ENCODE measurements at regions of chr15 and their contacts with region 1.

Region 1: GRCh38 chr15:58933281-58934113 is at the start of gene SLTM:
- DNase-seq: peak; percentile 87 to 98 (median 94)
- ATAC-seq: peak; percentile 92
- H3K4me3 ChIP-seq: peak within 1 kb of the TSS; percentile 83 to 84
- H3K4me3 Mint-ChIP-seq: peak within 1 kb of the TSS; percentile 99
- H3K27ac ChIP-seq: peak within 1 kb of the TSS; percentile 96
- H3K27ac Mint-ChIP-seq: peak within 1 kb of the TSS; percentile 100
- H3K4me1 ChIP-seq: peaks cover 22% of the 10 kb centered on the region
- H3K4me1 Mint-ChIP-seq: peaks cover 35% of the 10 kb centered on the region
- H3K27me3 ChIP-seq: no peaks in the 10 kb centered on the region
- H3K27me3 Mint-ChIP-seq: no peaks in the 10 kb centered on the region
- CTCF ChIP-seq: peak; percentile 30
- total RNA-seq, gene SLTM: 189 to 201 TPM

Region 2: GRCh38 chr15:57706405-57707209 is 1226.9 kb before region 1 on chr15 and contains the start of gene POLR2M:
- CTCF ChIA-PET with region 1: no interaction called
- POLR2A ChIA-PET with region 1: no interaction called
- intact Hi-C with region 1: loop called in 1 of 2 experiments (anchors 5 kb)
- DNase-seq: peak; percentile 81 to 98 (median 89)
- ATAC-seq: peak; percentile 87
- H3K4me3 ChIP-seq: peak within 1 kb of the TSS; percentile 85 to 87
- H3K4me3 Mint-ChIP-seq: peak within 1 kb of the TSS; percentile 87
- H3K27ac ChIP-seq: peak within 1 kb of the TSS; percentile 89 to 98
- H3K27ac Mint-ChIP-seq: peak within 1 kb of the TSS; percentile 92
- H3K4me1 ChIP-seq: peaks cover 56% of the 10 kb centered on the region
- H3K4me1 Mint-ChIP-seq: peaks cover 74% of the 10 kb centered on the region
- H3K27me3 ChIP-seq: no peaks in the 10 kb centered on the region
- H3K27me3 Mint-ChIP-seq: no peaks in the 10 kb centered on the region
- CTCF ChIP-seq: no peak
- total RNA-seq, gene POLR2M: 96.7 to 103 TPM

Region 3: GRCh38 chr15:58770857-58771620 is 162.5 kb before region 1 on chr15 and contains the start of gene MINDY2:
- CTCF ChIA-PET with region 1: no interaction called
- POLR2A ChIA-PET with region 1: interaction called, 5 read pairs
- intact Hi-C with region 1: loop called (anchors 1 to 2 kb)
- DNase-seq: peak; percentile 83 to 97 (median 94)
- ATAC-seq: peak; percentile 94
- H3K4me3 ChIP-seq: peak within 1 kb of the TSS; percentile 98
- H3K4me3 Mint-ChIP-seq: peak within 1 kb of the TSS; percentile 92
- H3K27ac ChIP-seq: peak within 1 kb of the TSS; percentile 86 to 89
- H3K27ac Mint-ChIP-seq: peak within 1 kb of the TSS; percentile 94
- H3K4me1 ChIP-seq: peaks cover 34% of the 10 kb centered on the region
- H3K4me1 Mint-ChIP-seq: peaks cover 22% of the 10 kb centered on the region
- H3K27me3 ChIP-seq: no peaks in the 10 kb centered on the region
- H3K27me3 Mint-ChIP-seq: no peaks in the 10 kb centered on the region
- CTCF ChIP-seq: no peak
- total RNA-seq, gene MINDY2: 4.7 to 4.9 TPM

Region 4: DNA sequence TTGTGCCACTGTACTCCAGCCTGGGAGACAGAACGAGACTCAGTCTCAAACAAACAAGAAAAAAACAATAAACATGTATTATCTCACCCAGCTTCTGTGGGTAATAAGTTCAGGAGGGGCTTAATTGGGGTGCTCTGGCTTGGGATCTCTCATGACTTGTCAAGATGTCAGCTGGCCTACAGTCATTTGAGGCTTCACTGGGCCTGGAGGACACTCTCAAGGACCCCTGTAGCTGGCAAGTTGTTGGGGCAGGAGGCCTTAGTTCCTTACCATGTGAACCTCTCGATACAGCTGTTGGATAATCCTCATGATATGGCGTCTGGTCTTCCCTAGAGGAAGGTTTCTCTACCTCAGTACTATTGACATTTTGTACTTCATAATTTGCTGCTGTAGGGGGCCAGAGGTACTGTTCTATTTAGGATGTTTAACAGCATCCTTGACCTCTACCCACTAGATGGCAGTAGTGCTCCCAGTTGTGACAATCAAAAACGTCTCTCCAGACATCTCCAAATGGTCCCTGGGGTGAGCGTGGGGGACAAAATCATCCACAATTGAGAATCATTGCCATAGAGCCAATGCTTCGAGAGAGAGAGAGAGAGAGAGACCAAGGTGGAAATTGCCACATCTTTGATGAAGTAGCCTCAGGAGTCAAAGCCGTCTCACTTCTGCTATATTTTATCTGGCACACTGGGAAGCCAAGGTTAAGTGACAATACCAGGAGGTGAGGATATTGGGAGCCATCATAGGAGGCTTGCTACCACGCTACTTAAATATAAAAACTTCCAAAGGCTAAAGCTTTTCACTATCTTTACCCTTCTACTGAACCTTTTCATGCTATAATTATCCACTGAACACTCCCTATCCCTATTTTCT is 23.8 kb after region 1 on chr15:
- CTCF ChIA-PET with region 1: interaction called, 10 read pairs
- POLR2A ChIA-PET with region 1: interaction called, 4 read pairs
- intact Hi-C with region 1: no loop called
- DNase-seq: peak; percentile 18 to 84 (median 61)
- ATAC-seq: peak; percentile 96
- H3K4me3 ChIP-seq: no peak overlapping the region
- H3K4me3 Mint-ChIP-seq: no peak overlapping the region
- H3K27ac ChIP-seq: no peak overlapping the region
- H3K27ac Mint-ChIP-seq: no peak overlapping the region
- H3K4me1 ChIP-seq: no peaks in the 10 kb centered on the region
- H3K4me1 Mint-ChIP-seq: peaks cover 10% of the 10 kb centered on the region
- H3K27me3 ChIP-seq: no peaks in the 10 kb centered on the region
- H3K27me3 Mint-ChIP-seq: no peaks in the 10 kb centered on the region
- CTCF ChIP-seq: peak; percentile 82

Region 5: DNA sequence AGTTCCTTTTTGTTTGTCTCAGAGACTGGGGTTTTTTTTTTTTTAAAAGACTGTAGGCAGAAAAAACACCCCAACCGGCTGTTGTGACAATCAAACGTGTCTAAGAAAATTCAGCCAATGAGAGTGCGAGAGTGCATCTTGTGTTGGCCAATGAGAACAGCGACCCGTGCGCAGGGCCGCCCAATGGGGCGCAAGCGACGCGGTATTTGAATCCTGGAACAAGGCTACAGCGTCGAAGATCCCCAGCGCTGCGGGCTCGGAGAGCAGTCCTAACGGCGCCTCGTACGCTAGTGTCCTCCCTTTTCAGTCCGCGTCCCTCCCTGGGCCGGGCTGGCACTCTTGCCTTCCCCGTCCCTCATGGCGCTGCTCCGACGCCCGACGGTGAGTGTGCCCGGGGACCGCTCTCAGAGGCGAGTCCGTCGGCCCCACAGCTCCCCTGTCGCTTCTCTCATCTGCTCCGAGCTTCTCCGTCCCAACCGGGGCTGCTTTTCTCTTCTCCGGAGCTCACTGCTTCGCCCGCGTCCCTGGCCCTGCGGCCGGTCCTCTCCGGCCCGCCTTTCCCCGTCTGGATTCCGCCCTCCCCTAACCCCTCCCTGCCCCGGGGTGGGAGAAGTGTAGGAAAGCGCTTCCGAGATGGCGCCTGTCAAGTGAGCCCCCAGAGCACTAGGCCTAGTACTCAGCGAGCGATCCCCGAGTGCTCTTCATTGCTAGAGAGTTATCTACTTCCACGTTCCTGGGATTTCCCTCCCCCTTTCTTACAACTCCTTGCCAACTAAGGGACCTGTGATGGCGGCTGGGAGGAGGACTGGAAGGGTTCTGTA is 171.6 kb after region 1 on chr15 and contains the start of gene CCNB2:
- CTCF ChIA-PET with region 1: no interaction called
- POLR2A ChIA-PET with region 1: no interaction called
- intact Hi-C with region 1: loop called (anchors 2 kb)
- DNase-seq: peak; percentile 70 to 95 (median 80)
- ATAC-seq: peak; percentile 99
- H3K4me3 ChIP-seq: peak within 1 kb of the TSS; percentile 76 to 78
- H3K4me3 Mint-ChIP-seq: peak within 1 kb of the TSS; percentile 95
- H3K27ac ChIP-seq: peak within 1 kb of the TSS; percentile 60 to 71
- H3K27ac Mint-ChIP-seq: peak within 1 kb of the TSS; percentile 99
- H3K4me1 ChIP-seq: peaks cover 7% of the 10 kb centered on the region
- H3K4me1 Mint-ChIP-seq: peaks cover 17% of the 10 kb centered on the region
- H3K27me3 ChIP-seq: no peaks in the 10 kb centered on the region
- H3K27me3 Mint-ChIP-seq: no peaks in the 10 kb centered on the region
- CTCF ChIP-seq: no peak
- total RNA-seq, gene CCNB2: 0.33 to 0.64 TPM